Common myeloid progenitor, CD34-positive (primary cell): ENCODE measurements at regions of chr6 and their contacts with region 1.

Region 1: GRCh38 chr6:127516666-127517273 is 2.4 kb downstream of the MTCL3 start:
- DNase-seq: peak; percentile 25 to 61 (median 60)
- H3K4me3 ChIP-seq: peak overlapping the region in 6 of 7 experiments; percentile 47 to 74 (median 69)
- H3K27ac ChIP-seq: no peak overlapping the region
- H3K4me1 ChIP-seq: peaks cover 9 to 22% (median 19%) of the 10 kb centered on the region in 4 experiments
- H3K27me3 ChIP-seq: peaks cover 30 to 77% (median 39%) of the 10 kb centered on the region in 5 experiments

Region 2: DNA sequence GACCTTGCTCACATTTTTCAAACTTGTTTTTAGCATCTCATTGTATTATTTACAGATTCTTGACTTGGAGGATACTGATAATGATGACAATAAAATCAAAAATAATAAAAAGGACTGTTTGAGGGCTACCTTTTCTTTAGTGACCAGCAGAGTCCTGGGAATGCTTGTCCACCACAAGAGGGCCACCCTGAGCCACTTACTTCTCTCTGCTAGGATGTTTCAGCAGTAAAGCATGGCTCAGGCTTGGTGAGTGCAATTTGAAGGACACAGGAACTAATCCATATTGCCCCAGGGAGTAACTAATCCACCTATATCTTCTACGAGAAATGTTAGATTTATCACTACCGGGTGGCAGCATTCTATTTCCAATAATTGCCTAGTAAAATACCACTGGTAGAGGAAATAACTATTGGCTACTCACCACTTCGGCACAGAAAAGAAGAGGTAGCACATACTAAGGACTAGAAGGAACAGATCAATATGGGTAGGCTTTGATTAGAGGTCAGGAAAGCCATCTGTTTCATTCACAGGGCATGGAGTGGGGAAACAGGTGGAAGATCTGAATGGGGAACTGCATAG is 51.8 kb before region 1 on chr6:
- CTCF ChIA-PET with region 1: interaction called, 12 read pairs
- POLR2A ChIA-PET with region 1: no interaction called
- DNase-seq: peak; percentile 53 to 72 (median 65)
- H3K4me3 ChIP-seq: no peak overlapping the region
- H3K27ac ChIP-seq: no peak overlapping the region
- H3K4me1 ChIP-seq: peaks cover 0 to 2% (median 0%) of the 10 kb centered on the region in 4 experiments
- H3K27me3 ChIP-seq: no peaks in the 10 kb centered on the region

Region 3: DNA sequence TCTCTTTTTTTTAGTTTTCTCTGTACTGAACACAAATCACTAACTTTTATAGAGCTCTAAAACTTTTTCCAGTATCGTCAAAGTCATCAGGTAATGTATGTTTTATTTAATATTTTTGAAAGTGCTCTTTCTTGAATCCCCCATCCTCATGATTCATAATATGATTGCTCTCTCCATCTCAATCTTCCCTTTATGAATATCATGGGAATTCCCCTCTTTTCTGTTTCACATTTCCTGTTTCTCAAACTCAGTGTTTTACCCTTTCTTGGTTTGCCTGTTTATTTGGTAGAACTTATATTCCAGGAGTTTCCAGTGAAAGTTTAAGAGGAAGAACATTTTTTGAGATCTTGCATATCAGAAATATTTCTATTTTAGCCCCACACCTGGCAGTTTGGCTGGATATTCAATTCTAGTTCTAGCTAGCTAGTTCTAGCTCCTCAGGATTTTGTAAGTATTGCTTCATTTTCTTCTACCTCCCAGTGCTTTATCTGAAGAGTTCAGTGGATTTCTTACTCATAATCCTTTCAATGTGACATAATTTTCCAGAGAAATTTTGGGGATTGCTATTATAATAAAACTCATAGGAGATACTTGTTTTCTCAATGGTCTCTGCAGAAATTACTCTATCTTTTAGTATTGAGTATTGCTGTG is 54.1 kb after region 1 on chr6:
- CTCF ChIA-PET with region 1: no interaction called
- POLR2A ChIA-PET with region 1: no interaction called
- DNase-seq: no peak
- H3K4me3 ChIP-seq: no peak overlapping the region
- H3K27ac ChIP-seq: no peak overlapping the region
- H3K4me1 ChIP-seq: no peaks in the 10 kb centered on the region
- H3K27me3 ChIP-seq: no peaks in the 10 kb centered on the region